ENCODE measurements at regions of chr9 and their contacts with region 1.

Region 1: DNA sequence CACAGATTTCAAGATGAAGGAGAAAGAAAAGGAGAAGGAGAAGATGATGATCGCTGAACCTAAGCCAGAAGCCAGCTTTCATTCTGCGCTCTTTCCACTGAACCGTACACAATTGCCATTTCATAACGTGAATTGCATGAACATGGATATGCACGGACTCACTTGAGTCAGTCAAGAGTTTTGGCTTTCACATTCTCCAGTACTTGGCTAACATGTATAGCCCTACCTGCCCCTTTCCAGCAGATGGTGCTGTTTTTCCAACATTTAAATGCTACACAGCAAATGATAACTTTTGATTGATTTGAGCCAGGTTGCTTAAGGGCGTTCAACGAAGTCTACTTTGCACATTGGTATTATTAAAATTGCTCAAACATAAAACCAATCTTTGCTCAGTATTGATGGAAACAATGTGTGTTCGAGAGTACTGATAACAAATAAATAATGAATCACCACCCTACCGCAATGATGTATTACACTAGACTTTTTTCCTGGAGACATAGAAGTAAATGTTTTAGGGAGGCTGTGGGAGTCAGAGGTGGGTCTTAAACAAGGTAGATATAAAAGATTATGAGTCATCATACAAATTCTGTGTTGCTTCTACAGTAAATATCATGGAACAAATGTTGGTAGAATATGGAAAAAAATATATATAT is 196.4 kb downstream of the TRPM3 start:
- DNase-seq: peak in 1 of 2 donors; percentile 82
- H3K4me3 ChIP-seq: peak overlapping the region; percentile 41 to 57
- H3K27ac ChIP-seq: peak overlapping the region; percentile 56 to 70
- H3K4me1 ChIP-seq: peaks cover 3 to 4% of the 10 kb centered on the region in 2 donors
- H3K27me3 ChIP-seq: no peaks in the 10 kb centered on the region
- CTCF ChIP-seq: peak; percentile 68 to 77 (median 76)

Region 2: GRCh38 chr9:70962664-70963435 is 37.8 kb after region 1 on chr9:
- intact Hi-C with region 1: no loop called
- DNase-seq: no peak
- H3K4me3 ChIP-seq: no peak overlapping the region
- H3K27ac ChIP-seq: no peak overlapping the region
- H3K4me1 ChIP-seq: no peaks in the 10 kb centered on the region
- H3K27me3 ChIP-seq: no peaks in the 10 kb centered on the region
- CTCF ChIP-seq: no peak

Region 3: GRCh38 chr9:71249729-71250317 is 324.8 kb after region 1 on chr9:
- intact Hi-C with region 1: loop called (anchors 1 kb)
- DNase-seq: no peak
- H3K4me3 ChIP-seq: no peak overlapping the region
- H3K27ac ChIP-seq: no peak overlapping the region
- H3K4me1 ChIP-seq: no peaks in the 10 kb centered on the region
- H3K27me3 ChIP-seq: no peaks in the 10 kb centered on the region
- CTCF ChIP-seq: peak; percentile 46 to 77 (median 71)

Measured in ascending aorta (tissue), 2 donors.